ENCODE measurements at regions of chr2 and their contacts with region 1.

Region 1: DNA sequence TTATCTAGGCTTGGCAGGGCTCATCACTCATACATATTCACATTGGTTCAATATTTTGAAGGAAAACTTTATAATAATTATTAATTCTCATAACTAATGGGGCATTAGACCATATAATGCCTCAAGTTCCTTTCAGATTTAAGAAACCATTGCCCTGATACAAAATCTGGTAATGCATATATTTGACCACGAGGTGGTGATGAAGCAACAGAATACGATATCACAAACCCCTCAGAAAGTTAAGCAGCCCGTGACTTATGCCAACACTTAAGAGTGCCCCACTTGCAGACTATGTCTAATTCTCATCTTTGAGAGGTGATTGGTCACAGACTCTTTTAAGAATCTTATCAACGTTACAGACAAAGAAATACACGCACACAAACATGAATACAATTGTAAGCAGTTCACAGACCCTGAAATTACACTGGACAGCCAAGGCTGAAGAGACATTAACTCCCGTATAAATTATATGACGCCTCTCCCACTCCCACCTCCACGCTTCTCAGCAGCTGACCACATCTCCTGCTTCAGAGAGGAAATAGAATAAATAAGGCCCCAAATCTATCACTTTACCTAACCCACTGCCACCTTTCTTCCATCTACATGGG is 20.7 kb upstream of the DNAH6 start:
- DNase-seq: no peak
- H3K4me3 Mint-ChIP-seq: no peak overlapping the region
- H3K27ac Mint-ChIP-seq: no peak overlapping the region
- H3K4me1 Mint-ChIP-seq: peaks cover 6% of the 10 kb centered on the region
- H3K27me3 Mint-ChIP-seq: peaks cover 5% of the 10 kb centered on the region

Region 2: GRCh38 chr2:84459018-84459943 is 36.4 kb before region 1 on chr2 and contains the start of gene SUCLG1:
- intact Hi-C with region 1: no loop called
- DNase-seq: peak; percentile 85
- H3K4me3 Mint-ChIP-seq: peak within 1 kb of the TSS; percentile 95
- H3K27ac Mint-ChIP-seq: peak within 1 kb of the TSS; percentile 96
- H3K4me1 Mint-ChIP-seq: peaks cover 33% of the 10 kb centered on the region
- H3K27me3 Mint-ChIP-seq: no peaks in the 10 kb centered on the region
- total RNA-seq, gene SUCLG1: 65.3 and 69.5 TPM in 2 replicates

Region 3: DNA sequence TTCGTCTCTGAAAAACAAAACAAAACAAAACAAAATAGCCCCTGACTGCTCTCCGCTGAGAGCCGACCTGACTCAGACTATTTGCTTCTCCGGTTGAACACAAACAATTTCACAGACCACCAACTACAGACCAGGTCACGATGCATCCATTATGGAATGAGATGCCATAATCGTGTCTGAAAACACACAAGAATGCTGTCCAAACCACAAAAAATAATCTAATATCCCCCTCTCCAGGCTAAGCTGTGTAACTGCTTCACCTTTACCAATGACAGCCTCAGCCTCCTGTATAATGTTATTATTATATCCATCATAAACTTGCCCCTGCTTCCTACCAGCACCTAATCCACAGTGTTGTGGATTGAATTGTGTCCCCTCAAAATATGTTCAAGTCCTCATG is 135.4 kb after region 1 on chr2:
- intact Hi-C with region 1: loop called (anchors 1 kb)
- DNase-seq: no peak
- H3K4me3 Mint-ChIP-seq: no peak overlapping the region
- H3K27ac Mint-ChIP-seq: no peak overlapping the region
- H3K4me1 Mint-ChIP-seq: peaks cover 6% of the 10 kb centered on the region
- H3K27me3 Mint-ChIP-seq: peaks cover 14% of the 10 kb centered on the region

Region 4: GRCh38 chr2:84865181-84865783 is 369.6 kb after region 1 on chr2:
- intact Hi-C with region 1: loop called (anchors 2 kb)
- DNase-seq: no peak
- H3K4me3 Mint-ChIP-seq: no peak overlapping the region
- H3K27ac Mint-ChIP-seq: no peak overlapping the region
- H3K4me1 Mint-ChIP-seq: peaks cover 49% of the 10 kb centered on the region
- H3K27me3 Mint-ChIP-seq: no peaks in the 10 kb centered on the region